ENCODE measurements at regions of chr1 and their contacts with region 1.

Region 1: DNA sequence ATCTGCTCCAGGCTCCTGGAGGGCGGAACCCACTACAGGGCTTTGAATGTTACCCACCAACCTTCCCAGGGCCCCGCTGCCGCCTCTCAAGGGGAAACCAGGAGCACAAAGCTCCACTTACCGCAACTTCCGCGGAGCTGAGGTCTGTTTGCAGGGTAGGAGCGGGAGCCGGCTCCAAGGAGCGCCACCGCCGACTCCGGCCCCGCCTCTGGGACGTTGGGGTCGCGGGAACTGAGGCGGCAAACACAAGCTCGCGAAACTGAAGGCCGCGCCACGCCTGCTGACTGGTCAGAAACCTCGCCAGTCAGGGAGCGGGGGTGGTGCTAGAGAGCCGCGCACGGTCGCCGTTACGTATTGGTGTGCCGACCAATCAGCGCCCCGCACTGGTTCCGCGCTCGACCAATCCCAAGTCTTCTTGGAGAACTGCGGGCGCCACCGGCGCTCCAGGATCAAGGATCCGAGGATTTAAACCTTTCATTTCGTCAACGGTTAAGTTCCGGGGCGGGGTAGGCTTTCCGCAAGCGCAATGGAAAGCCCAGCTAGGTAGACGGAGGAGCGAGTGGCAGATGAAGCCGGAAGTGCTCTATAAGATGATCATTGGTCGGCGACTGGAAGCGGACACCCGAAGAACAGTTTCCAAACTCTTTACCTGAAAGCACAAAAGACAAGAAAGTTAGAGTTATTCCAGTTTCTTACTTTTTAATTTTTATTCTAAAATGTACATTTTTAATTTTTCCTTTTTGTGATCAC is at the start of gene STIL:
- DNase-seq: peak; percentile 98
- CTCF ChIP-seq: no peak

Region 2: DNA sequence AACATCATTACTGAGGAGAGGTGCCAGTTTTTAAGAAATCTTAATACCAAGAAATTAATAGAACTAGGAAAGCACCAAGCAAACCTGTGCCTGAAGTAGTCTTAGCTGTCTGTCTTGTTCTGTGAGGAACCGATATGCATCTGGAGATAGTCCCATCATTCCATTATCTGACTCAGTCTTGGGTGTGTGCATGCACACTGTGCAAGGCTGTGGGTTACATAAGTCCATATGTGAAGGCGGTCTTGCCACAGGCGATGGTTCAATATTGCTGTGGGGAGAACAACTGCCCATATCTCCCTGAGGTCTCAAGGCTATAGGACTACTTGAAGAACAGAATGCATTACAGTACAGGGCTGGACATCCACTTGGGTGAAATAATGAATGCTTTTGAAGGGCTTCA is 33.9 kb before region 1 on chr1:
- CTCF ChIA-PET with region 1: no interaction called
- POLR2A ChIA-PET with region 1: no interaction called
- DNase-seq: no peak
- CTCF ChIP-seq: no peak

Region 3: DNA sequence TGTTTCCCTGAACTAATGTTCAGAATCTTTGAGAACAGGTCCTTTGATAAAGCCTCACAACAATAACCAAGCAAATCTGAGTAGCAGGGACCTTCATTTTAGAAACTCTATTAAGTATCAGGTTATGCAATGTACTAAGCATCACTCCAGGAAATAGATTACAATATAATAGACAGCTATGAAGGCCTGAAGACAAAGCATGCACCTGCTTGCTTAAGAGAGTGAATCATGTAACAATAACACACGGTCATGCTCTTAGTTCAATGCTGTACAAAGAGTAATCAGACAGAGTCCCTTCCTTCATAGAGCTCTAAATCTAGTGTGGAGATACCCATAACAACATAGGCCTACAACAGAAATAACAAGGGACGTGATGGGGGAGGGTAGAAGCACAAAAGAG is 11.4 kb after region 1 on chr1:
- CTCF ChIA-PET with region 1: interaction called, 14 read pairs
- POLR2A ChIA-PET with region 1: no interaction called
- DNase-seq: no peak
- CTCF ChIP-seq: no peak

Region 4: DNA sequence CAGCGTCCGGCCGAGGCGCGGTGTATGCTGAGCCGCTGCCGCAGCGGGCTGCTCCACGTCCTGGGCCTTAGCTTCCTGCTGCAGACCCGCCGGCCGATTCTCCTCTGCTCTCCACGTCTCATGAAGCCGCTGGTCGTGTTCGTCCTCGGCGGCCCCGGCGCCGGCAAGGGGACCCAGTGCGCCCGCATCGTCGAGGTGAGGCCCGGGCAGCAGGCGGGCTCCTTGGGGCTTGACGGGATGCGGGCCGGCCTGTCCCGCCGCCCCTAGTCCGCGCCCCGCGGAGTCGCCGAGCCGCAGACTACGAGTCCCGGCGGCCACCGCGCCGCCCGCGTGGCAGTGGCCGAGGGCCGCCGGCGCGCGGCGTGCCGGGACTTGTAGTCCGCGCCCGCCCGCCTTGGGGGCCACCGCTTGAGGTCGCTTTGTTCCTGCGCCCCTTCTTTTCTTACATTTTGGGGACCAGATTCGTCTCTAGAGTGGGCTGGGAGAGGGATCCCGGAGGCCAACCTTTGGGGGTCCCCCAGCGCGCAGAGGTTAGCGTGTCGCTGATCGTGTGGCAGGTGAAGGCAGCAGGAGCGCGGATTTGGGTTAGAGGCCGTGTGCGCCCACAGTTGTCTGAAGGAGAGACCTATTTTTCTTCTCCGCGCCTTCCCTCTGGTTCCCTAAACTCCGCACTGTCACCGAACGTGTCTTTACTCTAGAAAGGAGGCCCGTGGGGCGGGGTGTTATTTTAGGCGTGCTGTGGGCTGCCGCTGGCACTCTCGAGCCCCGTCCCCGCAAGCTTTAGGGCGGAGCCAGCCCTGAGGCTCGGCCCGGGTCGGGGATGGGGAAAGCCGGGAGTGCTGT is 20.1 kb after region 1 on chr1:
- CTCF ChIA-PET with region 1: interaction called, 4 read pairs
- POLR2A ChIA-PET with region 1: interaction called, 10 read pairs
- DNase-seq: peak; percentile 89
- CTCF ChIP-seq: peak; percentile 34

Measured in GM10248 (cell line).